ENCODE measurements at regions of chr22 and their contacts with region 1.

Region 1: GRCh38 chr22:20456064-20456721 is 18.6 kb upstream of the SCARF2 start:
- DNase-seq: peak; percentile 92

Region 2: GRCh38 chr22:20405931-20406685 is 50.1 kb before region 1 on chr22:
- intact Hi-C with region 1: loop called in 1 of 2 experiments (anchors 10 kb)
- DNase-seq: no peak

Region 3: DNA sequence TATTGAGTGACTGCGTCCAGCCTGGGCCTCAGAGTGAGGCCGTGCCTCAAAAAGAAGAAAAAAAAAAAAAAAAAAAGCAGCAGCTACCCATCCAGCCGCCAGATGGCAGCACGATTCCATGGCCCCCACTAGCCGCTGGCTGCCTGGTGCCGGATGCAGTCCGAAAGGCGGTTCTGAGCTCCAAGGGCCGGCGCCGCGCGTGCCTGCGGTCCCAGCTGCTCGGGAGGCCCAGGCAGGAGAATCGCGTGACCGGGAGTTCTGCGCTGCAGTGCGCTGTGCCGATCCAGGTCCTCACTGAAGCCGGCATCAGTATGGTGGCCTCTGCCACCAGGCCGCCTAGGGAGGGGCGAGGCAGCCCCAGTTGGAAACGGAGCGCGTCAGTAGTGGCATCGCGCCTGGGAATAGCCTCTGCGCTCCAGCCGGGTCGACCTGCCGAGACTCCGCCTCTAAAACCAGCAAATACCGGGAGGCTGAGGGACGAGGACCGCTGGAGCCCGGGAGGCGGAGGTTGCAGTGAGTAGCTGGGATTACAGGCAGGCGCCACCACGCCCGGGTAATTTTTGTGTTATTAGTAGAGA is 37.9 kb before region 1 on chr22:
- intact Hi-C with region 1: loop called in 1 of 2 experiments (anchors 2 kb)
- DNase-seq: peak; percentile 94

Measured in posterior vena cava (tissue), 2 donors.